B cell (primary cell): ENCODE measurements at regions of chr2 and their contacts with region 1.

Region 1: DNA sequence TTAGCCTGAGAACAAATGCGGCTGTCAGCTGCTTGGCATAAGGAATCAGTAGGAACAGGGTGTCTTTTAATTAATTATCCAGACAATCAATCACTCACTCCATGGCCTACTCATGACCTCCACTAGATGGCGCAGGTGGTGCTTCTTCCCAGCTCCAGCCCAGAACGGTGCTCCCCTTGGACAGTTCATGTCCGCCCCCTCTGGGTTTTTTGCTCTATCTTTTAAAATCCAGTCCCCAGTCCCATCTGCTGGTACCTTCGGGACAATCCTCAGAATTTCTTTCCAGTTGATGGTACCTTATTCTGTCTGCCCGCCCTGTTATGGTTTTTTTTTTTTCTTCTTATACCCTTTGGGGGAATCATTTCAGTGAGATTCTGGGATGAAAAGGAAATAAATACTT is 99.8 kb downstream of the CACNB4 start:
- DNase-seq: peak; percentile 50
- ATAC-seq: peak; percentile 57
- H3K4me3 ChIP-seq: no peak overlapping the region
- H3K4me3 Mint-ChIP-seq: no peak overlapping the region
- H3K27ac ChIP-seq: no peak overlapping the region
- H3K27ac Mint-ChIP-seq: no peak overlapping the region
- H3K4me1 ChIP-seq: peaks cover 0 to under 1% of the 10 kb centered on the region in 2 donors
- H3K4me1 Mint-ChIP-seq: no peaks in the 10 kb centered on the region
- H3K27me3 ChIP-seq: no peaks in the 10 kb centered on the region
- H3K27me3 Mint-ChIP-seq: no peaks in the 10 kb centered on the region
- CTCF ChIP-seq: peak; percentile 89

Region 2: GRCh38 chr2:151808258-151809072 is 190.6 kb before region 1 on chr2:
- CTCF ChIA-PET with region 1: interaction called, 4 read pairs
- POLR2A ChIA-PET with region 1: no interaction called
- intact Hi-C with region 1: loop called (anchors 5 kb)
- DNase-seq: peak; percentile 60
- ATAC-seq: peak; percentile 64
- H3K4me3 ChIP-seq: no peak overlapping the region
- H3K4me3 Mint-ChIP-seq: no peak overlapping the region
- H3K27ac ChIP-seq: peak overlapping the region in 1 of 2 donors; percentile 31
- H3K27ac Mint-ChIP-seq: no peak overlapping the region
- H3K4me1 ChIP-seq: peaks cover 4 to 11% of the 10 kb centered on the region in 2 donors
- H3K4me1 Mint-ChIP-seq: peaks cover 7% of the 10 kb centered on the region
- H3K27me3 ChIP-seq: no peaks in the 10 kb centered on the region
- H3K27me3 Mint-ChIP-seq: no peaks in the 10 kb centered on the region
- CTCF ChIP-seq: peak; percentile 94